Sciatic nerve (tissue), 2 donors: ENCODE measurements at regions of chr15 and their contacts with region 1.

Region 1: DNA sequence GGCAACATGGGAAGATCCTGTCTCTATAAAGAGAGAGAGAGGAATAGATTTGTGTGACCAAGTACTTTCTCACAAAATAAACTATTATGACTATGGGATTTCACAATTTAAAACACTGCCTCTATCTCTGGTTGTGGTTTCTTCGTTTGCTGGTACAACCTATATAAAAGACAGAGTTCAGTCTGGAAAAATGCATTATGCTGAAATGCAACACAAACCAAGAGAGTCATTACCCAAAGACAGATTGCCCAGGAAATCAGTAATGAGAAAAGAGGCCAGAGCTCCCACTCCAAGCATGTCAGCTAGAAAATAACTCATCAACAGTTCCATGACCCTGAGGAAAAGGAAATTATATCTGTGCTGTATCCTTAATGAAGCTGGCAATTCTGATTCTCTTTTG is 23.2 kb downstream of the GPR176 start:
- DNase-seq: no peak
- ATAC-seq: no peak

Region 2: DNA sequence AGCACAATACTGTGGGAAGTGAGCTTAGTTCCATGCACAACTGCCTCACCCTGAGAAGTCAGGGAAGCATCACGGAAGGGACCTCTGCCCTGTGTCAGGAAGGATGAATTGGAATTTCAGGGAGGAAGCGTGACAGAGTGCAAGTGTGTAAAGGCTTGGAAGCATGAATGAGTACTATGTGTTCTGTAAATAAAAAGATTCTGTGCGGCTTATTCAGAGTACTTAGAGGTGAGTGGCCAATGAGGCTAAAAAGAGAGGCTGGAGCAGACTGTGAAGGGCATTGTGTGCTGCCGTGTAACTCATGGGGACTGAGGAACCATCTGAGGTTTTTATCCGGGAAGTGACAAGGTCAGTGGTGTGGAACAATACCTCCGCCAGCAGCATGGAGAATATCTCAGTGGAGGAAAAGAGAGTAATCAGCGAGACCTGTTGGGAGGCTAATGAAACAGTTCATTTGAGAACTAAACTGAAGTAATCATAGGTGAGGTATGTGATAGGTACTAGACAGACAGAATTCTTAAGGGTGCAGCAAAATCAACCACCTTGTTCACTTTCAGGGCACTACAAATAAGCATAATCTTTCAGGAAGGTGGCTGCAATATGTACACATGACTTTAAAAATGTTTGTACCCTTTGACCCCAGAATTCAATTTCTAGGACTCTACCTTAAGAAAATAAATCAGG is 1709.1 kb before region 1 on chr15:
- intact Hi-C with region 1: loop called (anchors 5 kb)
- DNase-seq: no peak
- ATAC-seq: no peak